Activated T-helper 1 cell treated with anti-CD3 and anti-CD28 coated beads, Interleukin-12 subunit alpha, Interleukin-12 subunit beta, Interleukin-2, Interleukin-4 antibody, amounts not matched to agents 30 ng/mL and 10 ng/mL and 1 ng/mL, durations not matched to agents 14 hours and 24 hours and 36 hours (primary cell): ENCODE measurements at regions of chrX and their contacts with region 1.

Region 1: GRCh38 chrX:41923257-41923969 is at the start of gene CASK:
- DNase-seq: peak; percentile 88
- H3K4me3 Mint-ChIP-seq: peak within 1 kb of the TSS; percentile 95
- H3K27ac Mint-ChIP-seq: peak within 1 kb of the TSS; percentile 90
- H3K4me1 Mint-ChIP-seq: peaks cover 33% of the 10 kb centered on the region
- H3K27me3 Mint-ChIP-seq: peaks cover 5% of the 10 kb centered on the region
- total RNA-seq, gene CASK: 17.4 and 30.5 TPM in 2 replicates

Region 2: GRCh38 chrX:41441934-41442823 is 481.2 kb before region 1 on chrX:
- intact Hi-C with region 1: loop called (anchors 5 kb)
- DNase-seq: peak; percentile 87
- H3K4me3 Mint-ChIP-seq: peak overlapping the region; percentile 73
- H3K27ac Mint-ChIP-seq: peak overlapping the region; percentile 85
- H3K4me1 Mint-ChIP-seq: peaks cover 18% of the 10 kb centered on the region
- H3K27me3 Mint-ChIP-seq: no peaks in the 10 kb centered on the region

Region 3: GRCh38 chrX:41720125-41720779 is 203.2 kb before region 1 on chrX:
- intact Hi-C with region 1: loop called (anchors 1 kb)
- DNase-seq: peak; percentile 23
- H3K4me3 Mint-ChIP-seq: no peak overlapping the region
- H3K27ac Mint-ChIP-seq: peak overlapping the region; percentile 82
- H3K4me1 Mint-ChIP-seq: peaks cover 61% of the 10 kb centered on the region
- H3K27me3 Mint-ChIP-seq: no peaks in the 10 kb centered on the region

Region 4: DNA sequence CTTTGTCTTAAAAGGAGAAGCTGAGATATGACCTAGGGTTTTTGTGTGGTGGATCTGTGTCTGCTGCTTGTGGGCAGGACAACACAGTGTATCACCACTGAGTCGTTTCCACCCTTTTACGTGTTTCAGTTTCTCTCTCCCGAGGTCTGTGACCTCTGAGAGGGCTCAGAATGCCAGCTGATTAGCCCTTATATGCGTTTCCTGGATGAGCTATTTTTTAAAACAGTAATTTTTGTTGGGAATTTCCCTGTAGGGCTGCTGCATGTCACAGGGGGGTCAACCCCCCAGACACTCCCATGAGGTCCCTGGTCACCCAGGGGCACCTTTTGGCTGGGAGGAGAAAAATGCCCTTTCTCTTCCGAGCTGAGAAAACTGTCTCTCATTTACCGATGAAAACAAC is 170.3 kb after region 1 on chrX:
- intact Hi-C with region 1: loop called (anchors 5 kb)
- DNase-seq: no peak
- H3K4me3 Mint-ChIP-seq: no peak overlapping the region
- H3K27ac Mint-ChIP-seq: peak overlapping the region; percentile 29
- H3K4me1 Mint-ChIP-seq: peaks cover 28% of the 10 kb centered on the region
- H3K27me3 Mint-ChIP-seq: no peaks in the 10 kb centered on the region

Region 5: DNA sequence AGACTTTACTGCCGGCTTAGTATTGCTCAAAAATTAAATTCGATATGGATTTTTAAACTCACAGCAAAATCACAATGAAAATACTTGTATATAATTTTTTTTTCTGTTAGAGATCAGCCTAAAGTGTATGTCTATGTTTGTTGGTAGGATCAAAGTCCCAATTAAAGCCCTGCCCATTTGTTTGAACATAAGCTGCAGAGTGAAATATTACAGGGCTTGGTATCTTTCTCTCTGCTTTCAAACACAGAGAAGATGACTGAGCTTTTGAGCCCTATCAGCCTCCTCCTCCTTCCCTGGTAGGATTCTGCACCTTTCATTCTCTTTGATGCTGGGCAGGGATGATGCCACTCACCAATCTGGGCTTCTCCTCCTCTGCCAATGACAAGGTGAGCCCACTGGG is 509.1 kb after region 1 on chrX:
- intact Hi-C with region 1: loop called (anchors 10 kb)
- DNase-seq: no peak
- H3K4me3 Mint-ChIP-seq: no peak overlapping the region
- H3K27ac Mint-ChIP-seq: no peak overlapping the region
- H3K4me1 Mint-ChIP-seq: peaks cover 13% of the 10 kb centered on the region
- H3K27me3 Mint-ChIP-seq: no peaks in the 10 kb centered on the region